Heart left ventricle (tissue), 16 donors: ENCODE measurements at regions of chr5 and their contacts with region 1.

Region 1: GRCh38 chr5:136087961-136088871 is 44.4 kb upstream of the SMAD5 start:
- DNase-seq: peak; percentile 90 to 94 (median 92)
- ATAC-seq: peak; percentile 97 to 99 (median 98)
- H3K4me3 ChIP-seq: peak overlapping the region in 3 of 12 donors; percentile 4 to 23 (median 17)
- H3K27ac ChIP-seq: peak overlapping the region; percentile 68 to 94 (median 88)
- H3K4me1 ChIP-seq: peaks cover 6 to 62% (median 32%) of the 10 kb centered on the region in 12 donors
- H3K27me3 ChIP-seq: no peaks in the 10 kb centered on the region
- CTCF ChIP-seq: no peak
- POLR2A ChIP-seq: no peak

Region 2: DNA sequence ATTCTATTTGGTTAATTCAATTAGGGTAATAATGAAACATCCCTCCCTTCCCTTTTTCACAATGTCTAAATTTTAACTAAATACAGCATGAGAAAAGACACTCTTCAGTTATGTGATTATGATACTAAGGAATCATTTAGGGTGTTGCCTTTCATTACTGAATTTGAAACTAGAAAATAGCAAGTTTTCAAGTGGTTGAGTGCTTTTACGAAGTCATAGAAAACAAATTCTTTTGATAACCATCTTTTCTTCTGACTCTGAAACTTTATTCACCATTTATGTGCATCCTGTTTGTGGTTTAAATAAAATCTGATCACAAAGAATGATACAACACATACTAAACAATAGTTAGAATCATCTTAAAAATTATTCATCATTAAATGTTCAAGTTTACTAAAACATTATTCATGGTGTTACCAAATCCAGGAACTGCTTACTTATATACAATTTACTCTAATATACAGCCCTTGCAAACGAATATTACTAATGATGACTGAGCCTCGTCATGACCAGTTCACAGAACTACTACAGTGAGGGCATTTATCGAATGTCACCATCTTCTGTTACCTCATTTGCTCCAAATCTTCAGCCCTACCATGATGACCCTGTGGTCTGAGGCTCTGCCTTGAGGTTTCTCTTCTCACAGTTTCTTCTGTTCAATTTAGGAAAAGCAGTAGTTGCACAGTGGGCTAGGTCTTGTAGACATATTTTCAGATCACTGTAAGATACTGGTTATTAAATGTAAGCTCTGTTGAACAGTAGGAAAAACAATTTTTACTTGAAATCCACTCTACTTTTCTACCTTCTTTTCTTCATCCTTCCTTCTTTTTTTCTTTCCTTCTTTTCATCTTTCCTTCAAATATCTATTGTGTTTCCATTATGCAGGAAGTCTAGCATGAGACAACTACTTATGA is 174.2 kb before region 1 on chr5:
- intact Hi-C with region 1: no loop called
- DNase-seq: no peak
- ATAC-seq: no peak
- H3K4me3 ChIP-seq: no peak overlapping the region
- H3K27ac ChIP-seq: no peak overlapping the region
- H3K4me1 ChIP-seq: no peaks in the 10 kb centered on the region
- H3K27me3 ChIP-seq: peaks cover 0 to 65% (median 15%) of the 10 kb centered on the region in 9 donors
- CTCF ChIP-seq: no peak
- POLR2A ChIP-seq: no peak

Region 3: GRCh38 chr5:136132557-136133221 is 44.5 kb after region 1 on chr5 and contains the start of gene SMAD5:
- intact Hi-C with region 1: loop called (anchors 2 to 5 kb)
- DNase-seq: peak; percentile 97 to 99 (median 98)
- ATAC-seq: peak; percentile 97 to 99 (median 99)
- H3K4me3 ChIP-seq: peak within 1 kb of the TSS; percentile 80 to 95 (median 90)
- H3K27ac ChIP-seq: peak within 1 kb of the TSS; percentile 84 to 100 (median 98)
- H3K4me1 ChIP-seq: peaks cover 7 to 65% (median 39%) of the 10 kb centered on the region in 12 donors
- H3K27me3 ChIP-seq: no peaks in the 10 kb centered on the region
- CTCF ChIP-seq: peak in 1 of 12 donors; percentile 13
- POLR2A ChIP-seq: peak; percentile 36 to 86
- total RNA-seq, gene SMAD5: 24.9 to 53.3 (median 36.4) TPM